Right ventricle myocardium superior (tissue), 1 donor: ENCODE measurements at regions of chr12 and their contacts with region 1.

Region 1: GRCh38 chr12:89051065-89051677 is 301.1 kb downstream of the DUSP6 start:
- DNase-seq: no peak
- ATAC-seq: peak; percentile 81

Region 2: DNA sequence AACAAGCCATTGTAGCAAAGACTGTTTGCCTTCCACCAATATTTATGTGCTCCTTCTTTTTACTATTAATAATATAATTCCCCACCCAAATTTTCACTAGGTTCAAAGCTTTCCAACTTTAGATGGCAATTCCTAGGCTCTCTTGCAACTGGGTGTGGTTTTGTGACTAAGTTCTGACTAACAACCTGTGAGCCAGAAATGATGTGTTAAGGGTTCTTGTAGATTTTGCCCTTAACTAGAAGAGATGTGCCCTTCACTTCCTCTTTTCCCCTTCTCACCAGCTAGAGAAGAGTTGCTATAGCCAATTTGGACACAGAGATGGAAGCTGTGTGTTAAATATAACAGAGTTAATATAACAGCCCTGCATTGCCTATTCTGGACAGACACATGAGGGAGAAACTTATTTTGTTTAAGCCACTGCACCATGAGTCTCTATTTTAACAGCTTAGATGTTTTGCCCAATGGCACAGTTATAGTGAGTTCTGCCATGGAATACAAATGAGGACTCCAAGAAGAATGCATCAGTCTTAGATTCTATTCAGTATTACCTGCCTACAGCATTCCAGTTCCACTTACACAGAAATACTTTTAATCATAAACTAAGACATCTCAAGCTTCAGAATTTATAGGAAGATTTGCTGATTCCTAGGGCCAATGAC is 84.9 kb after region 1 on chr12:
- intact Hi-C with region 1: loop called (anchors 5 kb)
- DNase-seq: no peak
- ATAC-seq: no peak

Region 3: GRCh38 chr12:89461649-89462612 is 410.8 kb after region 1 on chr12:
- intact Hi-C with region 1: loop called (anchors 2 kb)
- DNase-seq: no peak
- ATAC-seq: peak; percentile 94